ENCODE measurements at regions of chr12 and their contacts with region 1.

Region 1: DNA sequence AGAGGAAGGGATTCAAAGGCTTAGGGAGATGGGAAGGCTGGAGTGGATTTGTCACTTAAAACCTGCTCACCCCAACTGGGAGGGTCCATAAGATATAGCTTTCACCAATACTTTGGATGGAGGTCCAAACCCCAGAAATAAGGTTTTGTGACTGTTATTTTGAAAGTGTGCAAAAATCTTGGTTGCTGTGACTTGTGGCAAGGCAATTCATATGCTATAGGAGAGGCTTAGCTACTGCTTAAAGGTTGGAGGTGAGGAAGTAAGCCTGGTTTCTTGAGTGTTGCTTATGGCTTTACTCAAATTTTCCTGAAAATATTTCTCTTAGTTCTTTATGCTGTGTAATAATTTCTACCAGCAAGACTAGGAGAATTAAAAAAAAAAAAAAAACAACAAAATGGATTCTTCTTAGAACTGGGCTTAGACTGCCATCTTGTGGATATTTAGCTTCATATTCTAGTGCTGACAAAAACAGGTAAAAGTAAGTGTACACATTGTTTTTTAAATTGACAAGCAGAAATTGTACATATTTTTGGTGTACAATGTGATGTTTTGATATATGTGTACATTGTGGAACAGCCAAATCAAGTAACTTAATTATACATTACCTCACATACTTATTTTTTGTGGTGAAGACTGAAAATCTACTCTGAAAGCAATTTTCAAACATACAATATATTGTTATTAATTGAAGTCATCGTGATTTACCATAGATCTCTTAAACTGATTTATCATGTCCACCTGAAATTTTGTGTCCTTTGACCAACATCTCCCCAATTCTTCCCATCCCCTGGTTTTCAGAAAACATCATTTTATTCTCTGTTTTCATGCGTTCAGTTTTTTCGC is 23.0 kb downstream of the PDE6H start:
- DNase-seq: peak; percentile 71
- H3K4me3 Mint-ChIP-seq: no peak overlapping the region
- H3K27ac Mint-ChIP-seq: peak overlapping the region; percentile 59
- H3K4me1 Mint-ChIP-seq: peaks cover 20% of the 10 kb centered on the region
- H3K27me3 Mint-ChIP-seq: no peaks in the 10 kb centered on the region
- CTCF ChIP-seq: peak; percentile 53

Region 2: DNA sequence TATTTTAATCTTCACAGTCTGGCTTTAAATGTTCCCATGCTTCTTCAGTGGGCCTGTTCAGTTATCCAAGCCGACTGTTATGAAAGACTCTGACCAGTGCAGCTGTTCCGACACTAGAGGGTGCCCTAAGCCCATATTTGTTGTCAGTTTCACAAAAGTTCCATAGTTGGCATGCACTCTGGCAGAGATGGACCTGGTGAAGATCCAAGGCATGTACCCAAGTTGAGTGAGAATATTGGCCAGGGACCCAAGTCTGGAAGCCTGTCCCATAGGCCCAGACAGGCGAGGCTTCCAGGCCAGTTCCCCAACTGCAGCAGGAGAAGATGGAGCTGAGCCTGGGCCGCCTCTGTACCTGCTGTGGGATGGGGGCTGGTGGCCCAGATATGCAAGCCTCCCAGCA is 272.0 kb before region 1 on chr12:
- CTCF ChIA-PET with region 1: no interaction called
- POLR2A ChIA-PET with region 1: no interaction called
- intact Hi-C with region 1: loop called (anchors 1 kb)
- DNase-seq: peak; percentile 43
- H3K4me3 Mint-ChIP-seq: no peak overlapping the region
- H3K27ac Mint-ChIP-seq: no peak overlapping the region
- H3K4me1 Mint-ChIP-seq: no peaks in the 10 kb centered on the region
- H3K27me3 Mint-ChIP-seq: no peaks in the 10 kb centered on the region
- CTCF ChIP-seq: no peak

Region 3: GRCh38 chr12:14741153-14741552 is 254.7 kb before region 1 on chr12:
- CTCF ChIA-PET with region 1: no interaction called
- POLR2A ChIA-PET with region 1: no interaction called
- intact Hi-C with region 1: no loop called
- DNase-seq: no peak
- H3K4me3 Mint-ChIP-seq: no peak overlapping the region
- H3K27ac Mint-ChIP-seq: no peak overlapping the region
- H3K4me1 Mint-ChIP-seq: no peaks in the 10 kb centered on the region
- H3K27me3 Mint-ChIP-seq: no peaks in the 10 kb centered on the region
- CTCF ChIP-seq: no peak

Region 4: DNA sequence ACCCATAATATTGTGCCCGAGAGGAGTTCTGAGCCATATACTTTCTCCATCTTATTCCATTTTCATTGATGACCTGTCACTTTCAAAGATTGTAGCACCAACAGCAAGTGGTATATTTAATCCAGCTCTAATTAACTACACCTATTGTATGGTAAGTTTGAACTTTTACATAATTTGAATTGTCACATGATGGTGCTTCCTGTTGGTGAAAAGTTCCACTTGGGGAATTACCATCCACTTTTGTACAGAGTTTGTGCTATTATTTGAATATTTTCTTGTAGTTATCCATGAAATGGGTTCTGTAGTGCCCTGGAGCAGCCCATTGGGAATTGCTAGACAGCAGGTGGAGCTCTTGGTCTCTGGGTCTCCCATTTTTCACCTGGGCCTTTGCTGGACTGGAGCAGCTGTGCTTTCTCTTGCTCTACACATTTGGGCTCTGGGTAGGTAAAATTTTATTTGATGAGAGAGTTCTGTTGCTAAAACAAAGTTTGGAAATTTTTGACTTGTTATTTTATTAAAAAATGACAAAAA is 184.8 kb before region 1 on chr12:
- CTCF ChIA-PET with region 1: interaction called, 84 read pairs
- POLR2A ChIA-PET with region 1: interaction called, 22 read pairs
- intact Hi-C with region 1: loop called (anchors 1 kb)
- DNase-seq: peak; percentile 64
- H3K4me3 Mint-ChIP-seq: no peak overlapping the region
- H3K27ac Mint-ChIP-seq: no peak overlapping the region
- H3K4me1 Mint-ChIP-seq: peaks cover 6% of the 10 kb centered on the region
- H3K27me3 Mint-ChIP-seq: no peaks in the 10 kb centered on the region
- CTCF ChIP-seq: peak; percentile 65

Region 5: DNA sequence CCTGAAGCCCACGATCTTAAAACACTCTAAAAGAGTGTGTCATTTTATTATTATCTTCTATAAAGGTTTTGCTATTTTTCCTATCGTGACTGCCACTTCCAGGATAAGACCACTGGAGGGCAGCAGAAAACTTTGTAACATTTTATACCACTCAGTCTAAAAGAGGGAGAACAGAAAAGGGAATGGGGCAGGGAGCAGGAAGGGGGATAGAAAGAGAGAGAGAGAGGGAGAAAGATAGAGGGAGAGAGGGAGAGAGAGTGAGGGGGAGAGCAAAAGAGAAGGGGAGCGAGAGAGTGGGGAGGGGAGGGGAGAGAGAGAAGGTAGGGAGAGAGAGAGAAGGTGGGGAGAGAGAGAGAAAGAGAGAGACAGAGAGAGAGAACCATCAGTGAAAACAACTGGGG is 150.5 kb before region 1 on chr12:
- CTCF ChIA-PET with region 1: interaction called, 121 read pairs
- POLR2A ChIA-PET with region 1: interaction called, 8 read pairs
- intact Hi-C with region 1: loop called (anchors 1 kb)
- DNase-seq: peak; percentile 74
- H3K4me3 Mint-ChIP-seq: no peak overlapping the region
- H3K27ac Mint-ChIP-seq: peak overlapping the region; percentile 78
- H3K4me1 Mint-ChIP-seq: peaks cover 23% of the 10 kb centered on the region
- H3K27me3 Mint-ChIP-seq: no peaks in the 10 kb centered on the region
- CTCF ChIP-seq: peak; percentile 68

Region 6: DNA sequence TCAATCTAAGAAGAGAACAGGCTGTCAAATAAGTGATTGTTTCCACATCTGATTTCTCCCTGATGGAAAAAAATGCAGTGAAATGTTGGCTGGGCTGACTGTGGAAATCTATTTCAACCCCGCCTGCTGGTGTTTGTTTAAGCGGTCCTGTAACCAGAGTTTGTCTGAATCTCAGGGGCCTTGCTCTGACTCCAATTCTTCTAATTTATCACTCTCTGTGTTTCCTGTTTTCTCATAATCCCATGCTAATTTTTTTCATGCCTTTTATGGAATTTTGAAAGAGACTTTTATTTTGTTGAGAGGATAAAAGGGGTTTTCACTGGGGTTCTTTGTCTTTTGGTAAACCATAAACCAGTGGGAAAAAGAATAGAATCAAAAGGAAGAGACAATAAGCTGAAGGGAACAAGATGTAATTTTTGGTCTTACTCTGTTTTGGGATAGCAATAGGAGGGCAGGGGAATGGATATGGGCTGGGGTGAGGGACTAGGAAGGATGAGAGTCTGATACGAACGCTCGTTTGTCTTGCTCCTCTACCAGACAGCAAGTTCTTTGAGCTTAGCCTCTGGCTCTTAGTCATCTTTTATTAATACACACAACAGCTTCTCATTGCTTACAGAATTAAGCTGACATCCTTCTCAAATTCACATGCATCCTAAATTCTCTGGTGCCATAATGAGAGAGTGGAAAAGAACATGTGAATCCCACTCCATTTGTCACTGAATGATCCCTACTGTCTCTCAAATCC is 102.1 kb before region 1 on chr12:
- CTCF ChIA-PET with region 1: interaction called, 10 read pairs
- POLR2A ChIA-PET with region 1: no interaction called
- intact Hi-C with region 1: no loop called
- DNase-seq: no peak
- H3K4me3 Mint-ChIP-seq: no peak overlapping the region
- H3K27ac Mint-ChIP-seq: no peak overlapping the region
- H3K4me1 Mint-ChIP-seq: peaks cover 8% of the 10 kb centered on the region
- H3K27me3 Mint-ChIP-seq: peaks cover 1% of the 10 kb centered on the region
- CTCF ChIP-seq: no peak

Region 7: GRCh38 chr12:15268927-15269552 is 273.2 kb after region 1 on chr12:
- CTCF ChIA-PET with region 1: interaction called, 4 read pairs
- POLR2A ChIA-PET with region 1: no interaction called
- intact Hi-C with region 1: loop called (anchors 1 kb)
- DNase-seq: peak; percentile 85
- H3K4me3 Mint-ChIP-seq: no peak overlapping the region
- H3K27ac Mint-ChIP-seq: peak overlapping the region; percentile 70
- H3K4me1 Mint-ChIP-seq: peaks cover 19% of the 10 kb centered on the region
- H3K27me3 Mint-ChIP-seq: no peaks in the 10 kb centered on the region
- CTCF ChIP-seq: peak; percentile 83